A673 (cell line): ENCODE measurements at regions of chr14 and their contacts with region 1.

Region 1: DNA sequence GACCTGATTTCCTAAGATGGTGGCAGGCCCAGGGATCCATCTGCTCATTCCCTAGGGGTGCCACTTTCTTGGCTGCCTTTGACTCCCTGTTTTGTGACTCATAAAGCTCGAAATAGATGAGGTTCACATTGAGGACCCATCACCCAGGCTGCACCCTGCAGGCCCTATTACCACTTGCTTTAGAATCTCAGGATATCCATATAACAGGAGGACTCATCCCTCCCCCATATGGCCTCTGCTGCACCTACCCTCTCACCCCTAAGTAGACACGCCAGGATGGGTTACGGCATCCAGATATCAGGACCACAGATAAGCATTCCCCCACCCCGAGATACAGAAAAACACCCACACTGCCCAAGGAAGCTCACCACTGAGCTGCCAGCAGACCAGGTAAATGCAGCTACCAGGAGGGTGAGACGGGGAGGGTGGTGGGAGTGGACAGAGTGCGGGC is 155.7 kb downstream of the DPF3 start:
- DNase-seq: no peak
- H3K4me3 ChIP-seq: no peak overlapping the region
- H3K27ac ChIP-seq: no peak overlapping the region
- H3K4me1 ChIP-seq: peaks cover 8% of the 10 kb centered on the region
- H3K27me3 ChIP-seq: no peaks in the 10 kb centered on the region
- CTCF ChIP-seq: no peak

Region 2: DNA sequence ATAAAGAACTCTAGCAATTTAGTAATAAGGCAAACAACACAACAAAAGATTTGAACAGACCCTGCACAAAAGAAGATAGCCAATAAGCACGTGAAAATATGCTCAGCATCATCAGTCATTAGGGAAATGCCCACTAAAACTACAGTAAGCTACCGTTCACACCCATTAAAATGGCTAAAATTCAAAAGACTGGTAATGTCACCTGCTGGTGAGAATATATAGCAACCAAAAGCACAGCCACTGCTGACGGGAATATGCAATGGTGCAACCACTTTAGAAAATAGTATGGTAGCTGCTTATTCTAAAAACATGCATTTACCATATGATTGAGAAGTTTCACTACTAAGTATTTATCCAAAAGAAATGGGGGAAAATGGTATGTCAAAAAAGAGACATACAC is 80.8 kb after region 1 on chr14:
- CTCF ChIA-PET with region 1: no interaction called
- POLR2A ChIA-PET with region 1: interaction called, 11 read pairs
- intact Hi-C with region 1: no loop called
- DNase-seq: no peak
- H3K4me3 ChIP-seq: no peak overlapping the region
- H3K27ac ChIP-seq: no peak overlapping the region
- H3K4me1 ChIP-seq: no peaks in the 10 kb centered on the region
- H3K27me3 ChIP-seq: no peaks in the 10 kb centered on the region
- CTCF ChIP-seq: no peak